ENCODE measurements at regions of chr5 and their contacts with region 1.

Region 1: GRCh38 chr5:57666582-57666981 is 184.0 kb upstream of the ACTBL2 start:
- DNase-seq: no peak
- ATAC-seq: no peak
- H3K4me3 Mint-ChIP-seq: no peak overlapping the region
- H3K27ac Mint-ChIP-seq: no peak overlapping the region
- H3K4me1 Mint-ChIP-seq: no peaks in the 10 kb centered on the region
- H3K27me3 Mint-ChIP-seq: peaks cover 4% of the 10 kb centered on the region

Region 2: GRCh38 chr5:57552033-57552432 is 114.5 kb before region 1 on chr5:
- CTCF ChIA-PET with region 1: no interaction called
- POLR2A ChIA-PET with region 1: no interaction called
- DNase-seq: no peak
- ATAC-seq: no peak
- H3K4me3 Mint-ChIP-seq: no peak overlapping the region
- H3K27ac Mint-ChIP-seq: no peak overlapping the region
- H3K4me1 Mint-ChIP-seq: no peaks in the 10 kb centered on the region
- H3K27me3 Mint-ChIP-seq: no peaks in the 10 kb centered on the region

Region 3: DNA sequence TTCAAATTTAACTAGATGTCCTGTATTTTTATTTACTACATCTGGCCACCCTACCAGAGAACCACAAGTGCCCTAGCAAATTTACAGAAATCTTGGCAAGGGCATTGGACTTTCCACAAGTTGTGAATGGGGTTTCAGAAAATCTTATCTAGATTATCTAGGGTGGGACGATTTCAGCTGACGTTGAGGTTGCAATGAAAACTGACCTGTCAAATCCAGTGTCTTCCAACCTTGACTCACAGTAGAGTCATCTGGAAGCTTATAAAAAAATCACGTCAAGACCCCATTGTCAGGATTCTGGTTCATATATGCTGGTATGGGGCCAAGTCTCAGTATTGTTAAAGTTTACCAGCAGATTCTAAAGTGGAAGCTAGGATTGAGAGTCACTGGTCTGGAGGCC is 74.3 kb before region 1 on chr5:
- CTCF ChIA-PET with region 1: no interaction called
- POLR2A ChIA-PET with region 1: no interaction called
- DNase-seq: no peak
- ATAC-seq: no peak
- H3K4me3 Mint-ChIP-seq: no peak overlapping the region
- H3K27ac Mint-ChIP-seq: no peak overlapping the region
- H3K4me1 Mint-ChIP-seq: no peaks in the 10 kb centered on the region
- H3K27me3 Mint-ChIP-seq: no peaks in the 10 kb centered on the region

Region 4: DNA sequence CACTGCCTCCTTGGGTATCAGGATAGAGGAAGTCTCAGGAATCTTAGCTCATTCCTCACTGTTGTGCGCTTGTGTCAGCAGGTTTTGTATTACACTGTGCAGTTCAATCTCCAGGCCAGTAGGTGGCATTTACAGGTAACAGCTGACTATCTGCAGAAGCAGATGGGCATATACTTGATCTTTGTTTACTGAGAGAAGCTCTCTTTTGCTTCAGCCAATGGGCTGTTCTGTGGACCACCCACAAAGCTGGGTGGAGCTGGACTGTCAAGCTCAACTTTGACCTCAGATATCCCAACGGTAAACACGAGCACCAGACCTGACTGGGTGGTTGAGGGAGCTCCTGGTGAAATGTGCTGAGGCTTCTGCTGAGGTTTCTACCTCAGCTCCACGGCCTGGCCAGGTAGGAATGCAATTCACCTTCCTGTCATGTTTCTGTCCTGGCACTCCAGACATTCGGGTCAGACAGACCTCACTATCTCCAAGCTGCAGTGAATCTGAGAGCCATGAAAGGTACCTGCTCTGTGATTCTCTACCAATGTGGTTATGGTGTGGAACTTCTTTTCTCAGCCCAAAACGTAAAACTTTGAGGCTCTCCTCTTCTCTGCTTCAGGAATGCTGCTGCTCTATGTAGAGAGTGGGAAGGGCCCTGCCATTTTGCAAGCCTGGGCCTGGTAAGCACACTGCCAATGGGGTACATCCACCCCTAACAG is 16.1 kb before region 1 on chr5:
- CTCF ChIA-PET with region 1: interaction called, 11 read pairs
- POLR2A ChIA-PET with region 1: no interaction called
- DNase-seq: peak; percentile 27
- ATAC-seq: no peak
- H3K4me3 Mint-ChIP-seq: no peak overlapping the region
- H3K27ac Mint-ChIP-seq: no peak overlapping the region
- H3K4me1 Mint-ChIP-seq: no peaks in the 10 kb centered on the region
- H3K27me3 Mint-ChIP-seq: peaks cover 3% of the 10 kb centered on the region

Region 5: GRCh38 chr5:57816108-57816507 is 149.5 kb after region 1 on chr5:
- CTCF ChIA-PET with region 1: no interaction called
- POLR2A ChIA-PET with region 1: no interaction called
- DNase-seq: no peak
- ATAC-seq: no peak
- H3K4me3 Mint-ChIP-seq: no peak overlapping the region
- H3K27ac Mint-ChIP-seq: no peak overlapping the region
- H3K4me1 Mint-ChIP-seq: no peaks in the 10 kb centered on the region
- H3K27me3 Mint-ChIP-seq: no peaks in the 10 kb centered on the region

Measured in activated CD8-positive, alpha-beta T cell treated with anti-CD3 and anti-CD28 coated beads, Interleukin-2, amount 10 ng/mL, durations not matched to agents 7 days and 5 days (primary cell).